Naive thymus-derived CD4-positive, alpha-beta T cell (primary cell): ENCODE measurements at regions of chr11 and their contacts with region 1.

Region 1: DNA sequence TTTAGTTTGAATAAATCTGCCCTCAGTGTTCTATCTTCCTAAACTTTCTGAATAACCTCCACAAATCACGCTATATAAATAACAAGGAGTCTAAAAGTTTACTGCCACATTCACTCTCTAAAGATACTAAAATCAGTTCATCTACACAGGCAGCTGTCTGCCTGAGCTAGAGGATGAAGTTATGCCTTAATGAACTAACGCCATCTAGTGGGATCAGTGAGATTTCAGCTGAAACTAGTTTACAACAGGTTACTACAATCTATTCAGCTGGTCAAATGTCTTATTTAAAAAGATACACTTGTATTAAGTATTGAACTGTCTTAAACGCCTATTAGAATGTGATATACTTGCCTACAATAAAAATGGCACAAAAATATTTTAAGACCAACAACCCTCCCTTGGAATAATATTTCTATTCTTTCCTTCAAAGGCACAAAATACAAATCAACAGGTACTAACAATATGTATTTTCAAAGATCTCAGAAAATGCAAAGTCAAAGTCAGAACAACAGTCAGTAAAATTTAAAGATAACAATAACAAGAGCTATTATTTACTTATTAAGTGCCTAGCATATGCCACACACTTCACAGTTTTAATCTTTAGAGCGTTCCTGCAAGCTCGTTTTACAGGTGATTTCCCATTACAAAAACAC is 84.1 kb downstream of the LARGE2 start:
- DNase-seq: peak in 7 of 9 donors; percentile 18 to 65 (median 53)
- ATAC-seq: peak; percentile 86
- H3K4me3 ChIP-seq: no peak overlapping the region
- H3K4me3 Mint-ChIP-seq: no peak overlapping the region
- H3K27ac ChIP-seq: no peak overlapping the region
- H3K27ac Mint-ChIP-seq: peak overlapping the region in 2 of 9 donors; percentile 2 to 41
- H3K4me1 ChIP-seq: no peaks in the 10 kb centered on the region
- H3K4me1 Mint-ChIP-seq: peaks cover under 1 to 8% (median 4%) of the 10 kb centered on the region in 7 donors
- H3K27me3 ChIP-seq: no peaks in the 10 kb centered on the region
- H3K27me3 Mint-ChIP-seq: no peaks in the 10 kb centered on the region

Region 2: GRCh38 chr11:45872513-45873356 is 133.8 kb before region 1 on chr11:
- CTCF ChIA-PET with region 1: interaction called, 7 read pairs
- POLR2A ChIA-PET with region 1: no interaction called
- intact Hi-C with region 1: loop called (anchors 1 kb)
- DNase-seq: peak in 1 of 9 donors; percentile 16
- ATAC-seq: peak; percentile 73
- H3K4me3 ChIP-seq: no peak overlapping the region
- H3K4me3 Mint-ChIP-seq: no peak overlapping the region
- H3K27ac ChIP-seq: no peak overlapping the region
- H3K27ac Mint-ChIP-seq: no peak overlapping the region
- H3K4me1 ChIP-seq: no peaks in the 10 kb centered on the region
- H3K4me1 Mint-ChIP-seq: peaks cover 0 to 5% (median 0%) of the 10 kb centered on the region in 7 donors
- H3K27me3 ChIP-seq: no peaks in the 10 kb centered on the region
- H3K27me3 Mint-ChIP-seq: no peaks in the 10 kb centered on the region

Region 3: DNA sequence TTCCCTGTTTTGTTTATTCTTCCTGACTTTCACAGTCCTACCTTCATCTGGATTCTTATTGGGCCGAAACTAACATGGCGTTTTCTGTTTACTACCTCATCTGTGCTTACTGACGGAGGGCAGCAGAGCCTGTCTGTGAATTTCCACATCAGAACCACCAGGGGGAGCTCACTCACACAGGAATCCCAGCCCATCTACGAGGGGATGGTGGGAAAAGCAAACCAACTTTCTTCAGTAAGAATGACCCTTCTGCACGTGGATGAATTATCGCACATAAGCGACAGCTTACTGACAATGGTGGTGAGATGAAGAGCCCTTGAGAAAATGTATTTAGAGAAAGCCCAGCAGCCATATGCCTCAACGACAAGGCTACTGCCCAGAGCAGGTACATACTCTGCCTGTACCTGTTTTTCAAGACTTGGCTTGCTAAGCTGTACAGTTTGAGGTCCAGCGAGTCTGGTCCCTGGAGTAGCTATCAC is 41.6 kb before region 1 on chr11:
- CTCF ChIA-PET with region 1: interaction called, 33 read pairs
- POLR2A ChIA-PET with region 1: interaction called, 3 read pairs
- intact Hi-C with region 1: loop called (anchors 1 kb)
- DNase-seq: peak; percentile 11 to 68 (median 61)
- ATAC-seq: peak; percentile 96
- H3K4me3 ChIP-seq: no peak overlapping the region
- H3K4me3 Mint-ChIP-seq: no peak overlapping the region
- H3K27ac ChIP-seq: no peak overlapping the region
- H3K27ac Mint-ChIP-seq: no peak overlapping the region
- H3K4me1 ChIP-seq: no peaks in the 10 kb centered on the region
- H3K4me1 Mint-ChIP-seq: no peaks in the 10 kb centered on the region
- H3K27me3 ChIP-seq: no peaks in the 10 kb centered on the region
- H3K27me3 Mint-ChIP-seq: no peaks in the 10 kb centered on the region

Region 4: GRCh38 chr11:45993531-45994001 is 13.0 kb before region 1 on chr11:
- CTCF ChIA-PET with region 1: interaction called, 12 read pairs
- POLR2A ChIA-PET with region 1: no interaction called
- intact Hi-C with region 1: no loop called
- DNase-seq: no peak
- ATAC-seq: no peak
- H3K4me3 ChIP-seq: no peak overlapping the region
- H3K4me3 Mint-ChIP-seq: no peak overlapping the region
- H3K27ac ChIP-seq: no peak overlapping the region
- H3K27ac Mint-ChIP-seq: no peak overlapping the region
- H3K4me1 ChIP-seq: no peaks in the 10 kb centered on the region
- H3K4me1 Mint-ChIP-seq: peaks cover 2 to 20% (median 8%) of the 10 kb centered on the region in 7 donors
- H3K27me3 ChIP-seq: no peaks in the 10 kb centered on the region
- H3K27me3 Mint-ChIP-seq: no peaks in the 10 kb centered on the region

Region 5: GRCh38 chr11:46504817-46505613 is 498.5 kb after region 1 on chr11:
- CTCF ChIA-PET with region 1: no interaction called
- POLR2A ChIA-PET with region 1: no interaction called
- intact Hi-C with region 1: no loop called
- DNase-seq: no peak
- ATAC-seq: no peak
- H3K4me3 ChIP-seq: no peak overlapping the region
- H3K4me3 Mint-ChIP-seq: no peak overlapping the region
- H3K27ac ChIP-seq: no peak overlapping the region
- H3K27ac Mint-ChIP-seq: peak overlapping the region in 2 of 9 donors; percentile 56 to 65
- H3K4me1 ChIP-seq: no peaks in the 10 kb centered on the region
- H3K4me1 Mint-ChIP-seq: peaks cover 4 to 26% (median 7%) of the 10 kb centered on the region in 7 donors
- H3K27me3 ChIP-seq: no peaks in the 10 kb centered on the region
- H3K27me3 Mint-ChIP-seq: no peaks in the 10 kb centered on the region